Activated CD4-positive, alpha-beta T cell treated with anti-CD3 and anti-CD28 coated beads for 36 hours (primary cell): ENCODE measurements at regions of chr17 and their contacts with region 1.

Region 1: DNA sequence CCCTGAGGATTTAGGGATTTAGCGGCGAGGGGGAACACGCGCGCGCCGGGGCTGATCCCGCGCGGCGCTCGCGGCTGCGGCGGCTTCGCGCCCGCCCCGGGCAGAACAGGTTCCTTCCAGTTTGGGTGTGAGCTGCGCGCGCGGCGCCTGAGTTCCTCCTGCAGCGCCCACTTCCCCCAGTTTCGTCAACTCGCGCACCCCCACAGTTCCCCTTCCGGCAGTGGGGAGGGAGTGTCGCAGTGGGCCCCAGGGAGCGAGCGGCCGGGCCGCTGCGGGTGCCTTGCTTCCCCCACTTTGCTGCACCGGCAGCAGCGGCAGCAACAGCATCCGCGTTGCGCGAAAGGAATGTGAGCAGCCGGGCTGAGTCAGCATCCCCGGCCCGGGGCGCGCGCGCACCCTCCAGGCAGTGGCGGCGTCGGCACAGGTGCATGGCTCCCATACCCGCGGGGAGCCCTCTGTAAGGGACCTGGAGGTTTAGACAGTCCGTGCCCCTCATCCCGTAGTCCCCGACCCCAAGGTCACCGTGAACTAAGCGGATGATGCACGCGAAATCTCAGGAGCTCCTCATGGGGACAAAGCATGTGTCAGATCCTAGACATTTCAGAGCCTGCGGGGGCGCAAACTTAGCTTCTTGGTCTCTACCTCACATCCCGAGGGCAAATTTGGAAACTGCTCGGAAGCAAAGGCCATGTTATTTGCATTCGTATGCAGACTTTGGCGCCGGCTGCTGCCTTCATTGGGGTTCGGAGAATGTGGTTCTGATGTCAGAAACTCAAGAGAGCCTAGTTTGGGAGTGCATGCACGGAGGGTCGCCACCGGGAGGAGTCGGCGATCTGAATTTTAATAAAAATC is 775 bp downstream of the ARSG start:
- DNase-seq: peak; percentile 92
- ATAC-seq: peak; percentile 71
- H3K4me3 Mint-ChIP-seq: peak overlapping the region; percentile 77
- H3K27ac Mint-ChIP-seq: peak overlapping the region; percentile 61
- H3K4me1 Mint-ChIP-seq: peaks cover 69% of the 10 kb centered on the region
- H3K27me3 Mint-ChIP-seq: no peaks in the 10 kb centered on the region

Region 2: DNA sequence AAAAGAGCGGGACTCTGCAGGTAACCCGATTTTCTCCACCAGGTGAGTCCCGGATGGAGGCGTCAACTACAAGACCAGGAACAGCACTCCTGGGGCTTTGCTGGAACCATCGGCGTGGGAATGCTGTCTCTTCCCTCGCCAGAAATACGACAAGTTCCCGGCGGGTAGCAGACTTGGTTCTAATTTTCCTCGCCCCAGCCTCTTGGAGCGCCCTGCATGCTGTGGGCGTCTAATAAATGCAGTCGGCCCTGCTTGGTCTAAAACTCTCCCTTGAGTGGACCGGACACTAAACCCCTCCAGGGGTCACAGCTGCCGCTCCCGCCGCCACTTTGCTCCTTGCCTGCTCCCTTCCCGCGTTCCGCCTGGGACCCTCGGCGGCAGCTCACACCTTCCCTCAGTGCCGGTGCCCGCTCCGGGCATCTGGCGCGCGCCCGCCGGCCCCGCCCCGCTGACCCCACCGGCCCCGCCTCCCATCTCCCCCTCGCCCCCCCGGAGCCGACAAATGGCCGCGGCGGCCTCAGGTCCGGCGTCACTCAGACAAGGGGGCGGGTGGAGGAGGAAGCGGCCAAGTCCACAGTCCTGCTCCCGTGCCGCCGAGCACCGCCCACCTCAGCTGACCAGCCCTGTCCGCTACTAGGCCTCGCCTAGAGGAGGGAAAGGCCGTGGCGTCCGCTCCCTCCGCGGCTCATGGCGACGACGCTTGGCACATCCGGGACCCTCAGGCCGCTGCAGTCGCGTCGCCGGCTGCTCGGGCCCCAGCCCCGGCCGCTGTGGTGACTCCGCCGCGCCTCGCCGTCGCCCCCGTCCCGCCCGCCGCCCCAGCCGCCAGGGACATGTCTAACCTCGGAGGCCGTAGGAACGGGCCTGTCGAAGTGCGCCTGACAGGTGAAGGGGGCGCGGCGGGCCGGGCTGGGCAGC is 190.7 kb before region 1 on chr17:
- CTCF ChIA-PET with region 1: interaction called, 3 read pairs
- POLR2A ChIA-PET with region 1: no interaction called
- intact Hi-C with region 1: loop called in 1 of 2 experiments (anchors 5 kb)
- DNase-seq: peak; percentile 71
- ATAC-seq: peak; percentile 63
- H3K4me3 Mint-ChIP-seq: peak overlapping the region; percentile 87
- H3K27ac Mint-ChIP-seq: peak overlapping the region; percentile 91
- H3K4me1 Mint-ChIP-seq: peaks cover 31% of the 10 kb centered on the region
- H3K27me3 Mint-ChIP-seq: no peaks in the 10 kb centered on the region

Region 3: DNA sequence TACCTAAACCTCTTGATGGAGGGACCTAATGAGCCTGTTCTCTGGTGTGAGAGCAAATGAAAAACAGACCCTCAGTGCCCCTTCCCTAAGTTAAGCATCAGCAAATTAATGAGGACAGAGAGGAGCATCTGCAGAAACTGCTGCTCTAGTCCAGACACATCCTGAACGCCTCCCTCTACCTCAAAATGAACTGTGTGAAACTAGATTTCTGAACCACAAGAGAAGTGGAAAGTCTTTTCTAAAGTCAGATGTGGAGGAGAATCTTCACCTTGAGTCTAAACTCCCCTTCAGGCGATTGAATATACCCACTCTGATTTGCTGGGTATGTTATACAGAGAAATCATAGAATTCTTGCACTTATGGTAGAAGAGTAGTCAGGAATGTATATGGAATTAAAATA is 148.6 kb before region 1 on chr17:
- CTCF ChIA-PET with region 1: no interaction called
- POLR2A ChIA-PET with region 1: no interaction called
- intact Hi-C with region 1: no loop called
- DNase-seq: no peak
- ATAC-seq: no peak
- H3K4me3 Mint-ChIP-seq: no peak overlapping the region
- H3K27ac Mint-ChIP-seq: no peak overlapping the region
- H3K4me1 Mint-ChIP-seq: peaks cover 4% of the 10 kb centered on the region
- H3K27me3 Mint-ChIP-seq: no peaks in the 10 kb centered on the region

Region 4: DNA sequence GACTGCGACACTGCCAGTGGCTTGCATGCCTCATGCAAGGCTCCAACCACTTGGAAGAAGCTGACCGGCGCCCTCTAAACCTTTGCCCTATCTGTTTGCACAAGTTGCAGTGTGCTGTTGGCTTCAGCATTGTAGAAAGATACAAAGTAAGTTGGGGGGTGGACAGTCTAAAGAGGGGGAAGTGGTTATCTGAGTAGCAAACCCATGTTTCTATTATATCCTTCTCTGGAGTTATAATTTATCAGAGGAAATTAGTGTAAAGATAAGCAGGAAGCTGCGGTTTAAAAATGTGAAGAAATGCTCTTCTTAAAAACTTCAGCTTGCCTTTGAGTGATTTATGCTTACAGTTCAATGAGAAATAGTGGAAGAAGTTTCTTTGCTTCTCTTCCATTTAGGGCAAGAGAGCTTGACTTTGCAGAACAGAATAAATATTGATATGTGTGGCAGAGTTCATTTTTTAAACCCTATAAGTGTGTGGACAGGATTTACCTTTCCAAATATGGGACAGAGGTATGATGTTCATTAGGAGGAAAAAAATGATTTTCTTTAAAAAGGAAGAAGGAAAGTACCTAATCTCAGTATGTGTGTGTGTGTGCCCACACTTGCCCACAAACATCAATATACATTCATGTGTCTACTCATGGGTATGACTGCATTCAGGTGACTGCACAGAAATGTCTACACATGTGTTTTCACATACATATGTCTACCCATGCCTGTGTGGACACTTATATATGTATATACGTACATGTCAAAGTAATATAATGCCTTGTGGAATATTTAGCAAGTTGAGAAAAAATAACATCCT is 36.1 kb before region 1 on chr17:
- CTCF ChIA-PET with region 1: interaction called, 3 read pairs
- POLR2A ChIA-PET with region 1: interaction called, 3 read pairs
- intact Hi-C with region 1: loop called (anchors 1 kb)
- DNase-seq: peak; percentile 54
- ATAC-seq: peak; percentile 75
- H3K4me3 Mint-ChIP-seq: no peak overlapping the region
- H3K27ac Mint-ChIP-seq: peak overlapping the region; percentile 65
- H3K4me1 Mint-ChIP-seq: peaks cover 78% of the 10 kb centered on the region
- H3K27me3 Mint-ChIP-seq: no peaks in the 10 kb centered on the region

Region 5: GRCh38 chr17:68356520-68356919 is 64.5 kb after region 1 on chr17:
- CTCF ChIA-PET with region 1: no interaction called
- POLR2A ChIA-PET with region 1: no interaction called
- intact Hi-C with region 1: loop called (anchors 1 kb)
- DNase-seq: peak; percentile 80
- ATAC-seq: peak; percentile 93
- H3K4me3 Mint-ChIP-seq: peak overlapping the region; percentile 45
- H3K27ac Mint-ChIP-seq: peak overlapping the region; percentile 76
- H3K4me1 Mint-ChIP-seq: peaks cover 58% of the 10 kb centered on the region
- H3K27me3 Mint-ChIP-seq: no peaks in the 10 kb centered on the region

Region 6: GRCh38 chr17:68512247-68512982 is 220.3 kb after region 1 on chr17 and contains the start of gene PRKAR1A:
- CTCF ChIA-PET with region 1: no interaction called
- POLR2A ChIA-PET with region 1: no interaction called
- intact Hi-C with region 1: loop called in 1 of 2 experiments (anchors 1 kb)
- DNase-seq: peak; percentile 95
- ATAC-seq: peak; percentile 92
- H3K4me3 Mint-ChIP-seq: peak within 1 kb of the TSS; percentile 93
- H3K27ac Mint-ChIP-seq: peak within 1 kb of the TSS; percentile 97
- H3K4me1 Mint-ChIP-seq: peaks cover 42% of the 10 kb centered on the region
- H3K27me3 Mint-ChIP-seq: no peaks in the 10 kb centered on the region
- total RNA-seq, gene PRKAR1A: 165 to 167 TPM